ENCODE measurements at regions of chr9 and their contacts with region 1.

Region 1: GRCh38 chr9:108272349-108272899 is 583.4 kb downstream of the ACTL7B start:
- DNase-seq: no peak
- H3K4me3 Mint-ChIP-seq: no peak overlapping the region
- H3K27ac Mint-ChIP-seq: no peak overlapping the region
- H3K4me1 Mint-ChIP-seq: no peaks in the 10 kb centered on the region
- H3K27me3 Mint-ChIP-seq: no peaks in the 10 kb centered on the region

Region 2: GRCh38 chr9:106575823-106576222 is 1696.6 kb before region 1 on chr9:
- intact Hi-C with region 1: loop called (anchors 10 kb)
- DNase-seq: no peak
- H3K4me3 Mint-ChIP-seq: no peak overlapping the region
- H3K27ac Mint-ChIP-seq: no peak overlapping the region
- H3K4me1 Mint-ChIP-seq: no peaks in the 10 kb centered on the region
- H3K27me3 Mint-ChIP-seq: no peaks in the 10 kb centered on the region

Region 3: GRCh38 chr9:108125625-108126024 is 146.8 kb before region 1 on chr9:
- intact Hi-C with region 1: no loop called
- DNase-seq: no peak
- H3K4me3 Mint-ChIP-seq: no peak overlapping the region
- H3K27ac Mint-ChIP-seq: no peak overlapping the region
- H3K4me1 Mint-ChIP-seq: no peaks in the 10 kb centered on the region
- H3K27me3 Mint-ChIP-seq: no peaks in the 10 kb centered on the region